ENCODE measurements at regions of chr22 and their contacts with region 1.

Region 1: DNA sequence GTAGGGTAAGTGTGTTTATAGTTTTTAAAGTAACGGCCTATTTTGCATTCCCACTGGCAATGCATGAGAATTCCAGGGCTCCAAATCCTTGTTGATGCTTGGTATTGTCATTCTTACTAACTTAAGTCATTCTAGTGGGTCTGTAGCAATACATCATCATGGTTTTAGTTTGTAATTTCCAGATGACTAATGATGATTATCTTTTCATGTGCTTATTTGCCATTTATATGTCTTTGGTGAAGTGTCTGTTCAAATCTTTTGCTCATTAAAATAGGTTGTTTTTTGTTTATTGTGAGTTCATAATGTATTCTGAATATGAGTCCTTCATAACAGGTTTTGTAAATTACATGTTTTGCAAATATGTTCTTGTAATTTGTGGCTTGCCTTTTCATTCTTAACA is 31.2 kb downstream of the MTMR3 start:
- DNase-seq: peak in 1 of 2 experiments; percentile 42
- H3K4me3 ChIP-seq: no peak overlapping the region
- H3K27ac ChIP-seq: peak overlapping the region; percentile 33; the same call in 1 of the 2 replicates
- H3K4me1 ChIP-seq: peaks cover 24% of the 10 kb centered on the region
- H3K27me3 ChIP-seq: no peaks in the 10 kb centered on the region
- CTCF ChIP-seq: no peak

Region 2: GRCh38 chr22:30044369-30044768 is 130.2 kb after region 1 on chr22:
- CTCF ChIA-PET with region 1: no interaction called
- POLR2A ChIA-PET with region 1: no interaction called
- intact Hi-C with region 1: no loop called
- DNase-seq: peak; percentile 61 to 96
- H3K4me3 ChIP-seq: no peak overlapping the region
- H3K27ac ChIP-seq: peak overlapping the region; percentile 56
- H3K4me1 ChIP-seq: peaks cover 32% of the 10 kb centered on the region
- H3K27me3 ChIP-seq: no peaks in the 10 kb centered on the region
- CTCF ChIP-seq: no peak

Region 3: GRCh38 chr22:30056015-30056414 is 141.8 kb after region 1 on chr22:
- CTCF ChIA-PET with region 1: no interaction called
- POLR2A ChIA-PET with region 1: interaction called, 12 read pairs
- intact Hi-C with region 1: no loop called
- DNase-seq: no peak
- H3K4me3 ChIP-seq: no peak overlapping the region
- H3K27ac ChIP-seq: no peak overlapping the region
- H3K4me1 ChIP-seq: no peaks in the 10 kb centered on the region
- H3K27me3 ChIP-seq: no peaks in the 10 kb centered on the region
- CTCF ChIP-seq: no peak

Measured in PC-9 (cell line).